Mammary epithelial cell (primary cell): ENCODE measurements at regions of chr4 and their contacts with region 1.

Region 1: GRCh38 chr4:114386637-114387233 is 211.9 kb upstream of the UGT8 start:
- DNase-seq: no peak
- H3K4me3 ChIP-seq: no peak overlapping the region
- H3K27ac ChIP-seq: no peak overlapping the region
- H3K4me1 ChIP-seq: peaks cover 18% of the 10 kb centered on the region
- H3K27me3 ChIP-seq: no peaks in the 10 kb centered on the region
- CTCF ChIP-seq: peak; percentile 68 to 73

Region 2: DNA sequence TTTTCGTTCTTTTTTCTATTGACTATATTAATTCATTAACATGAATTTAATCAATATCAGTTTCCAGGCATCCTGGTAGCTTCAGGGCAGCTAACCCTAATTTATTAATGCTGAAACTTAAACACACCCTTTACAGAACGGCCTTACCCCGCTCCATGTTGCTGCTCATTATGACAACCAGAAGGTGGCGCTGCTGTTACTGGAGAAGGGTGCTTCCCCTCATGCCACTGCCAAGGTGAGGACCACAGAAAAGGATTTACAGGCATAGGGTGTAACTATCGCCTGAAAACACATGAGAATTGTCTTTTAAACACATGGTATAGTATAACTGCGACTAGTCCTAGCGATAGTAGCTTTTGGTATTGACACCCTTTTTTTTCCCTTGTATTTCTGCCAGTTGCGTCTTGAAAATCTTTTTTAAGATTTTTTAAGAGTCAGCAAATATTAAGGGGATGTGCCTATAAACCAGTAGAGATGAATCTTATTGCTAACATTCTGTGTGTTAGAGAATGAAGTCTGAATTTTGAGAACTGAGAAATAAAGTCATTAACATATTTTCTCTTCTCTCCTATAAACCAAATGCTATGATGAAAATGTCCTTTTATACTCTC is 1108.3 kb before region 1 on chr4:
- CTCF ChIA-PET with region 1: no interaction called
- dilution Hi-C with region 1: no loop called
- in situ Hi-C with region 1: loop called in 1 of 2 experiments (anchors 25 kb)
- intact Hi-C with region 1: no loop called
- DNase-seq: peak; percentile 55
- H3K4me3 ChIP-seq: no peak overlapping the region
- H3K27ac ChIP-seq: no peak overlapping the region
- H3K4me1 ChIP-seq: no peaks in the 10 kb centered on the region
- H3K27me3 ChIP-seq: no peaks in the 10 kb centered on the region
- CTCF ChIP-seq: peak; percentile 85 to 88

Region 3: GRCh38 chr4:113404841-113405240 is 981.9 kb before region 1 on chr4:
- CTCF ChIA-PET with region 1: no interaction called
- dilution Hi-C with region 1: no loop called
- in situ Hi-C with region 1: loop called in 1 of 2 experiments (anchors 10 kb)
- intact Hi-C with region 1: no loop called
- DNase-seq: no peak
- H3K4me3 ChIP-seq: no peak overlapping the region
- H3K27ac ChIP-seq: no peak overlapping the region
- H3K4me1 ChIP-seq: no peaks in the 10 kb centered on the region
- H3K27me3 ChIP-seq: no peaks in the 10 kb centered on the region
- CTCF ChIP-seq: no peak

Region 4: DNA sequence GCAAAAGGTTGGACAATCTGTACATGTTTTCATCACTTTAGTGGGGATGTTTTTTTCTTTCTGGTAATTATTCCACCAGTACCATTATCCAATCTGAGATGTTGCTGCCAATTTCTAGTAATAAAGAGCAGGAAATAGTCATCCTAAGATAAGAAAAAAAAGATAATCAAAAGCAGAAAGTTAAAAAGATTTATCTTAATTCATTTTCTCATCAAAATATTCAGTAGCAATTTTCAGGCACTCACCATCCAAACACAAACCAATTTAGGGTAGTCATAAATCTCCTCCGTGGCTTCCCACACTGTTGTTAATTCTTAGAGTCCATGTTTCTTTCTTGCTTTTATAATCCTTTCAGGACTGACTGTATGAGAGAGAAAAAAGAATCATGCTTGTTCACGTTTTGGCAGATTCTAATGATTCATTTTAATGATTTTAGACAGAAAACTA is 51.8 kb before region 1 on chr4:
- CTCF ChIA-PET with region 1: no interaction called
- dilution Hi-C with region 1: no loop called
- in situ Hi-C with region 1: no loop called
- intact Hi-C with region 1: no loop called
- DNase-seq: peak; percentile 3
- H3K4me3 ChIP-seq: no peak overlapping the region
- H3K27ac ChIP-seq: no peak overlapping the region
- H3K4me1 ChIP-seq: no peaks in the 10 kb centered on the region
- H3K27me3 ChIP-seq: no peaks in the 10 kb centered on the region
- CTCF ChIP-seq: no peak

Region 5: GRCh38 chr4:114659386-114660008 is 272.8 kb after region 1 on chr4:
- CTCF ChIA-PET with region 1: no interaction called
- dilution Hi-C with region 1: no loop called
- in situ Hi-C with region 1: no loop called
- intact Hi-C with region 1: loop called (anchors 1 kb)
- DNase-seq: peak; percentile 54
- H3K4me3 ChIP-seq: no peak overlapping the region
- H3K27ac ChIP-seq: no peak overlapping the region
- H3K4me1 ChIP-seq: no peaks in the 10 kb centered on the region
- H3K27me3 ChIP-seq: no peaks in the 10 kb centered on the region
- CTCF ChIP-seq: peak; percentile 88 to 96